Activated B cell treated with CpG ODN at 0.5 μM for 24 hours (primary cell): ENCODE measurements at regions of chr16 and their contacts with region 1.

Region 1: GRCh38 chr16:89484923-89485679 is 5.3 kb downstream of the ANKRD11 start:
- DNase-seq: no peak
- ATAC-seq: peak; percentile 11
- H3K4me3 Mint-ChIP-seq: peak overlapping the region; percentile 74
- H3K27ac Mint-ChIP-seq: peak overlapping the region; percentile 82
- H3K4me1 Mint-ChIP-seq: peaks cover 88% of the 10 kb centered on the region
- H3K27me3 Mint-ChIP-seq: no peaks in the 10 kb centered on the region
- CTCF ChIP-seq: no peak

Region 2: DNA sequence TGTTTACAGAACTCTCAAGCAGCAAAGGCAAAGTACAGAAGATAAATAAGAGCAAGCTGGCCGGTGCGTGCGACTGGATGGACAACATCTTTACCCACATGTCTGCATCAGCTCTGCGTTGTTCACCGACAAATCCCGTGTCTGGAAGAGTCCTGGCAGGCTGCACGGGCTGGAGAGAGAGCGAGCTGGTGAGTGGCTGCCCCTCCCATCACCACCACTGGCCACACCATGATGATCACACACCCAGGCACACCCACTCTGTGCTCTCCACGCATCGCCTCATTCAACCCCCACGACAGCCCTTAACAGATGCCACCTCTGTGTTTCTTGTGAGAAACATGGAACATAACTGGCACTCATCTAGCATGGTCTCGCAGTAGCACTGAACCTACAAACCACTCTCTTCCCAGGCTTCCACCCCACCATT is 53.9 kb before region 1 on chr16:
- CTCF ChIA-PET with region 1: interaction called, 3 read pairs
- POLR2A ChIA-PET with region 1: interaction called, 17 read pairs
- intact Hi-C with region 1: loop called (anchors 5 kb)
- DNase-seq: no peak
- ATAC-seq: peak; percentile 51
- H3K4me3 Mint-ChIP-seq: peak overlapping the region; percentile 16
- H3K27ac Mint-ChIP-seq: no peak overlapping the region
- H3K4me1 Mint-ChIP-seq: peaks cover 37% of the 10 kb centered on the region
- H3K27me3 Mint-ChIP-seq: no peaks in the 10 kb centered on the region
- CTCF ChIP-seq: no peak

Region 3: GRCh38 chr16:90077226-90077756 is 592.2 kb after region 1 on chr16 and contains the start of gene PRDM7:
- CTCF ChIA-PET with region 1: no interaction called
- POLR2A ChIA-PET with region 1: no interaction called
- intact Hi-C with region 1: no loop called
- DNase-seq: peak; percentile 79
- ATAC-seq: peak; percentile 89
- H3K4me3 Mint-ChIP-seq: peak within 1 kb of the TSS; percentile 83
- H3K27ac Mint-ChIP-seq: peak within 1 kb of the TSS; percentile 75
- H3K4me1 Mint-ChIP-seq: peaks cover 20% of the 10 kb centered on the region
- H3K27me3 Mint-ChIP-seq: peaks cover 28% of the 10 kb centered on the region
- CTCF ChIP-seq: no peak
- total RNA-seq, gene PRDM7: not detected in 2 replicates